T-cell (primary cell): ENCODE measurements at regions of chr7 and their contacts with region 1.

Region 1: DNA sequence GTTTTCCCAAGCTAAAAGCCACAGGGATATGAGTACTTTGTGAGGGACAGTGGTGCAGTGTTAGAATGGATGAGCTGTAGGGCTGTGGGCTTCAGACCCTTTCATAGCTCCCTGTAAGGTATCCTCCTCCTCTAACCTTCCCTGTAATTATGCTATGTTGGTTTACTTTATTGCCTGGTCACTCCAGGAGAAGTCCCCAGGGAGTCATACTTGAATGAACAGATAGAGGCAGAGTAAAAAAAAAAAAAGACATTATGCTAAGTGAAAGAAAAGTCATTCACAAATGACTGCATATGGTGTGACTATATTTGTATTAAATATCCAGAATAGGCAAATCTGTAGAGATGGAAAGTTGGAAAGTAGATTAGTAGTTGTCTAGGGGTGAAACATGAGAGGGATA is 434.4 kb downstream of the AUTS2 start:
- DNase-seq: no peak
- ATAC-seq: no peak
- H3K4me3 ChIP-seq: no peak overlapping the region
- H3K4me3 Mint-ChIP-seq: no peak overlapping the region
- H3K27ac ChIP-seq: no peak overlapping the region
- H3K27ac Mint-ChIP-seq: no peak overlapping the region
- H3K4me1 ChIP-seq: no peaks in the 10 kb centered on the region
- H3K4me1 Mint-ChIP-seq: peaks cover 0 to 12% (median 2%) of the 10 kb centered on the region in 3 donors
- H3K27me3 ChIP-seq: no peaks in the 10 kb centered on the region
- H3K27me3 Mint-ChIP-seq: peaks cover 3 to 9% of the 10 kb centered on the region in 2 donors

Region 2: GRCh38 chr7:69020536-69020935 is 1012.1 kb before region 1 on chr7:
- CTCF ChIA-PET with region 1: no interaction called
- POLR2A ChIA-PET with region 1: no interaction called
- DNase-seq: no peak
- ATAC-seq: no peak
- H3K4me3 ChIP-seq: no peak overlapping the region
- H3K4me3 Mint-ChIP-seq: no peak overlapping the region
- H3K27ac ChIP-seq: no peak overlapping the region
- H3K27ac Mint-ChIP-seq: no peak overlapping the region
- H3K4me1 ChIP-seq: no peaks in the 10 kb centered on the region
- H3K4me1 Mint-ChIP-seq: no peaks in the 10 kb centered on the region
- H3K27me3 ChIP-seq: no peaks in the 10 kb centered on the region
- H3K27me3 Mint-ChIP-seq: peaks cover 0 to 4% of the 10 kb centered on the region in 2 donors

Region 3: GRCh38 chr7:69620063-69620462 is 412.6 kb before region 1 on chr7:
- CTCF ChIA-PET with region 1: no interaction called
- POLR2A ChIA-PET with region 1: no interaction called
- DNase-seq: no peak
- ATAC-seq: no peak
- H3K4me3 ChIP-seq: no peak overlapping the region
- H3K4me3 Mint-ChIP-seq: no peak overlapping the region
- H3K27ac ChIP-seq: no peak overlapping the region
- H3K27ac Mint-ChIP-seq: no peak overlapping the region
- H3K4me1 ChIP-seq: no peaks in the 10 kb centered on the region
- H3K4me1 Mint-ChIP-seq: no peaks in the 10 kb centered on the region
- H3K27me3 ChIP-seq: peaks cover 0 to 2% of the 10 kb centered on the region in 2 experiments
- H3K27me3 Mint-ChIP-seq: peaks cover 4 to 22% of the 10 kb centered on the region in 2 donors

Region 4: DNA sequence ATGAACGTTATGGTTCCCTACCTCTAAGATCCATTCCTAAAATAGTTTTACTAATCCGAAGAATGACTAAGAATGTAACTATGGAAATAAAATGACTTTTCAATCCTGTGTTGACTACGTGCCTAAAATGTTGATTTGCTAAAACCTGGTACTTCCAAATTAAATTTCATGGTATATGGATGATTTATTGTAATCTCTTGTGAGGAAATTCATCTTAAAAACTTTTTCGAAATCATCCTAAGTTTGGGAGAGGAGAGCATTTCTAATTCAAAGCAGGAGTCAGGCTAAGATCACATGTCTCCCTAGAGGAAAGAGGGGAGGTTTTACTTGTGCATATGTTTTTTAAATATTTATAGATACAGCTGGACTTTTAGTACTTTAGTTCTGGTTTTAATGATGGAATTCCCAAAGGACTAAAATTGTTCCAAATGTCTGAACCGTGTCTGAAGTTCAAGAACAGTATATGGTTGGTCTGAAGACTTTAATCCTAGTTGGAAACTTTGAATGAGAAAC is 49.5 kb after region 1 on chr7:
- CTCF ChIA-PET with region 1: no interaction called
- POLR2A ChIA-PET with region 1: no interaction called
- DNase-seq: no peak
- ATAC-seq: no peak
- H3K4me3 ChIP-seq: no peak overlapping the region
- H3K4me3 Mint-ChIP-seq: no peak overlapping the region
- H3K27ac ChIP-seq: no peak overlapping the region
- H3K27ac Mint-ChIP-seq: no peak overlapping the region
- H3K4me1 ChIP-seq: no peaks in the 10 kb centered on the region
- H3K4me1 Mint-ChIP-seq: no peaks in the 10 kb centered on the region
- H3K27me3 ChIP-seq: no peaks in the 10 kb centered on the region
- H3K27me3 Mint-ChIP-seq: no peaks in the 10 kb centered on the region

Region 5: GRCh38 chr7:70923181-70923845 is 890.7 kb after region 1 on chr7:
- CTCF ChIA-PET with region 1: no interaction called
- POLR2A ChIA-PET with region 1: interaction called in 1 of 2 experiments, 12 read pairs
- DNase-seq: no peak
- ATAC-seq: no peak
- H3K4me3 ChIP-seq: no peak overlapping the region
- H3K4me3 Mint-ChIP-seq: no peak overlapping the region
- H3K27ac ChIP-seq: no peak overlapping the region
- H3K27ac Mint-ChIP-seq: no peak overlapping the region
- H3K4me1 ChIP-seq: no peaks in the 10 kb centered on the region
- H3K4me1 Mint-ChIP-seq: no peaks in the 10 kb centered on the region
- H3K27me3 ChIP-seq: peaks cover 0 to 3% of the 10 kb centered on the region in 2 experiments
- H3K27me3 Mint-ChIP-seq: no peaks in the 10 kb centered on the region